Left ventricle myocardium superior (tissue), 1 donor: ENCODE measurements at regions of chr3 and their contacts with region 1.

Region 1: GRCh38 chr3:171334465-171334811 is 125.8 kb downstream of the TNIK start:
- DNase-seq: peak; percentile 69
- ATAC-seq: peak; percentile 89

Region 2: DNA sequence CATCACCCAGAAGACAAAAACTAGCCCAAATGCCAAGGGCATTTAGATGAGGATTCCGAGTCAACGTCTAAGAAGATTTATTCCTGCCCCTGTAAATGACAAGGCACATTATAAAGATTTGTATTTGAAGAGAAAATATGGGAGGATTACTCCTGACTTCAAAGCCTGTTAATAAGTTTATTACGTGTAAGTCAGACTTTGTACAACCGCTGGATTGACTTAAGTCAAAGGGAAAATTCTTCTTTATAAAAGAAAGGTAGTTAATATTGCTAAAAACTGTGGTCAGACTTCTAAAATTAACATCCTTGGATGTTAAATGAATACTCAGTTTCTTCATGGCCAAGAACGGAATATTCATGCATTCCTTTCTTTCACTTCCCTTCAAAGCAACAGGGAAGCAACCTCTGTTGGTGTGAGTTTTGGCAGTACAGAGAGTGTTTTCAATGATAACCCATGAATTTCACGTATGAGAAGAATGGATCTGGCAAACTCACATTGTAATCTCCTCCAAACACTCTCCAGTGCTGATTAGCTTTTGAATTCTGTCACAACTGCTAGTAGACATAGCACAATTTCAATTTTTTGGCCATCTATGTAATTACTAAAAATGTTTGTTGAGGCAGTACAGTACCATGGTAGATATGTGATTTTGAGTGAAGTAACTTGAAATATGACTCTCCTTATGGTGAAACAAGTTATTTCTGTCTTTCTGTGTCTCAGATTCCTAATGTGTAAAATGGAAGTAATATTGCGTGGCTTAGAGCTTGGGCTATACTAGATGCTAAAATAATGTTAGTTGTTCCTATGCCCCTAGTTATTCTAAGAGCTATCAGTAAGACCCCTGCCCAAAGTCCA is 413.9 kb after region 1 on chr3:
- intact Hi-C with region 1: loop called (anchors 10 kb)
- DNase-seq: no peak
- ATAC-seq: peak; percentile 76